Right lobe of liver (tissue), 6 donors: ENCODE measurements at regions of chr12 and their contacts with region 1.

Region 1: DNA sequence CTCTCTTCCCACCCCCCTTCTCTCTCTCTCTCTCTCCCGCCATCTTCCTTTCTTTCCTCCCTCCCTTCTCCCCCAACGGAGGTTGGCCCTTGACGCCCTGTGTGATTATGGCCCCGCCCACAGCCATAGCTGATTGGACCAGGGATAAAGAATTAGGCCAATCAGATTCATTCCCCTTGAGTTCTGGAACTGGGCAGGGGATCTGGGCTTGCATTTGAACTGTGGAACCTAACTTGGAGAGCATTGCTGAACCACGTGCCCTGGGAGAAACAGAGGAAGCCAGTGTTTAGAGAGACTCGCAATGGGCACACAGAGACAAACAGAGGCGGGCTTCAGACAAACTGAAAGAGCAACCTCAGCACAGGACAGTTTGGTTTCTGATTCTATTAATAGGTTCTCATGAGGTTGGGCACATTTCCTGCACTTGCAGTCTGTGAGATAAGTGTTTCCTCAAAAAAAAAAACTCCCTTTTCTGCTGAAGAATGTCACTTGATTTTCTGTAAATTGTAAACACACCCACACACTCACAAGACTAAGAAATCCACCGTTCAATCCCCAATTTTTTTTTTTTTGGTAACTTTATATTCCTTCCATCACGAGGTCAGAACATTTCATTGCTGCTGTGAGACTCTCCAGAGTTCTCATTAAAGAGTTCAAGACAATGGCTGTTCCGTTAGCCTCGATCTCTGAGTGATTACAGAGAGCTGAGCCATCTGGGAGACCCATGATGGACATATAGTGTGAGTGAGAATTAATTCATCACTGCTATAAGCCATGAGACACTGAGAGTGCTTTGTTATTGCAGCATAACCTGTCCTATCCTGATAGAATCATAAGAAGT is 3.5 kb upstream of the P2RX7 start:
- DNase-seq: peak; percentile 84 to 92 (median 92)
- ATAC-seq: peak; percentile 58 to 79 (median 76)
- H3K4me3 ChIP-seq: no peak overlapping the region
- H3K27ac ChIP-seq: peak overlapping the region; percentile 73 to 91 (median 90)
- H3K4me1 ChIP-seq: peaks cover 0 to 59% (median 23%) of the 10 kb centered on the region in 4 donors
- H3K27me3 ChIP-seq: no peaks in the 10 kb centered on the region
- CTCF ChIP-seq: no peak
- POLR2A ChIP-seq: peak; percentile 9

Region 2: GRCh38 chr12:121223292-121224285 is 94.4 kb after region 1 on chr12:
- intact Hi-C with region 1: loop called (anchors 10 kb)
- DNase-seq: peak in 1 of 3 donors; percentile 72
- ATAC-seq: peak; percentile 70 to 84 (median 77)
- H3K4me3 ChIP-seq: no peak overlapping the region
- H3K27ac ChIP-seq: peak overlapping the region in 1 of 3 donors; percentile 1
- H3K4me1 ChIP-seq: peaks cover 0 to 22% (median 9%) of the 10 kb centered on the region in 4 donors
- H3K27me3 ChIP-seq: no peaks in the 10 kb centered on the region
- CTCF ChIP-seq: peak; percentile 35 to 64 (median 48)
- POLR2A ChIP-seq: no peak